ENCODE measurements at regions of chr2 and their contacts with region 1.

Region 1: GRCh38 chr2:37877457-37878315 is 47.4 kb upstream of the RMDN2 start:
- DNase-seq: peak; percentile 83
- H3K4me3 Mint-ChIP-seq: no peak overlapping the region
- H3K27ac Mint-ChIP-seq: no peak overlapping the region
- H3K4me1 Mint-ChIP-seq: peaks cover 26% of the 10 kb centered on the region
- H3K27me3 Mint-ChIP-seq: peaks cover 25% of the 10 kb centered on the region

Region 2: GRCh38 chr2:37168217-37168981 is 709.3 kb before region 1 on chr2:
- intact Hi-C with region 1: loop called (anchors 2 kb)
- DNase-seq: peak; percentile 75
- H3K4me3 Mint-ChIP-seq: no peak overlapping the region
- H3K27ac Mint-ChIP-seq: no peak overlapping the region
- H3K4me1 Mint-ChIP-seq: no peaks in the 10 kb centered on the region
- H3K27me3 Mint-ChIP-seq: peaks cover 3% of the 10 kb centered on the region

Region 3: GRCh38 chr2:37414470-37414949 is 463.2 kb before region 1 on chr2:
- intact Hi-C with region 1: loop called (anchors 2 kb)
- DNase-seq: peak; percentile 63
- H3K4me3 Mint-ChIP-seq: no peak overlapping the region
- H3K27ac Mint-ChIP-seq: no peak overlapping the region
- H3K4me1 Mint-ChIP-seq: peaks cover 2% of the 10 kb centered on the region
- H3K27me3 Mint-ChIP-seq: peaks cover 33% of the 10 kb centered on the region

Region 4: GRCh38 chr2:37711308-37711731 is 166.4 kb before region 1 on chr2:
- intact Hi-C with region 1: loop called (anchors 10 kb)
- DNase-seq: peak; percentile 83
- H3K4me3 Mint-ChIP-seq: peak overlapping the region; percentile 1
- H3K27ac Mint-ChIP-seq: peak overlapping the region; percentile 14
- H3K4me1 Mint-ChIP-seq: peaks cover 43% of the 10 kb centered on the region
- H3K27me3 Mint-ChIP-seq: peaks cover under 1% of the 10 kb centered on the region

Region 5: DNA sequence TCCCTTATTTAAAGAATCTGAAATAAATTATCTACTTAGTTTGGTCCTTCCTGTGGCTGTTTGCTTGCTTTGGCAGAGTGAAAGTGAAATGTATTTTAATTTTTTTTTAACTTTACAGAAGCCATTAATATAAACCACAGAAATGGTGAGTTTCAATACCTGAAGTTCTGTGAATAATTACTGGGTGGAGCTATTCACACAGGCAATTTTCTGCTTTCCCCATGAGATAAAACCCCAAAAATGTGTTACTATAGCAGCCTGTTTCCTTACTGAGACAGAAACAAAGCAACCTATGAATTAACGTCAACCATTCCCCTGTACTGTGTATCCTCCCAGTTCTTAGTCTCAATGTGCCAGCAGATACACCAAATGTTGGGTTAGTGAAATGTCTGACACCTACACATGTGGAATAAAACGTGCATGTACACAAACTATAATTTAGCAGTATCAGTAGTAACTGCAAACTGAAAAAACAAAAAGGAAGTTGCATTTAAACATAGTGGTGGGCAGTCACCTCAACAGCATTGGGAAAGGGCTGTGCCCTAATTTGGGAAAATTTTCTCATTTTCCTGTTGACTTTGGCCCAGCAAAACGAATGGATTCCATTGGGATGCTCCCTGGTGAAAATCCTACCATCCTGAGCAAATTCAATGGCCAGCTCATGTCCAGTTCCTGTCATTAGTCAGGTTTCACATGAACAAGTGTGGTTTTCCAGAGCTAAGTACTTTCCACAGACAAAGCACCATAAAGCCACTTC is 25.7 kb before region 1 on chr2:
- intact Hi-C with region 1: no loop called
- DNase-seq: no peak
- H3K4me3 Mint-ChIP-seq: no peak overlapping the region
- H3K27ac Mint-ChIP-seq: no peak overlapping the region
- H3K4me1 Mint-ChIP-seq: peaks cover 5% of the 10 kb centered on the region
- H3K27me3 Mint-ChIP-seq: peaks cover 3% of the 10 kb centered on the region